CD8-positive, alpha-beta T cell (primary cell): ENCODE measurements at regions of chr5 and their contacts with region 1.

Region 1: GRCh38 chr5:134225618-134226440 is at the start of gene PPP2CA:
- DNase-seq: peak; percentile 98 to 100 (median 99)
- ATAC-seq: peak; percentile 80
- H3K4me3 ChIP-seq: peak within 1 kb of the TSS; percentile 83 to 87
- H3K4me3 Mint-ChIP-seq: peak within 1 kb of the TSS; percentile 96
- H3K27ac ChIP-seq: peak within 1 kb of the TSS; percentile 95 to 96
- H3K27ac Mint-ChIP-seq: peak within 1 kb of the TSS; percentile 98
- H3K4me1 ChIP-seq: peaks cover 45% of the 10 kb centered on the region
- H3K4me1 Mint-ChIP-seq: peaks cover 50% of the 10 kb centered on the region
- H3K27me3 ChIP-seq: no peaks in the 10 kb centered on the region
- H3K27me3 Mint-ChIP-seq: no peaks in the 10 kb centered on the region
- CTCF ChIP-seq: no peak
- total RNA-seq, gene PPP2CA: 233 to 260 TPM

Region 2: GRCh38 chr5:132746954-132747615 is 1478.7 kb before region 1 on chr5 and contains the start of gene CCNI2:
- CTCF ChIA-PET with region 1: no interaction called
- POLR2A ChIA-PET with region 1: no interaction called
- intact Hi-C with region 1: loop called in 1 of 2 experiments (anchors 5 kb)
- DNase-seq: peak; percentile 34 to 82 (median 65)
- ATAC-seq: peak; percentile 85
- H3K4me3 ChIP-seq: peak within 1 kb of the TSS; percentile 57 to 59
- H3K4me3 Mint-ChIP-seq: peak within 1 kb of the TSS; percentile 84
- H3K27ac ChIP-seq: peak within 1 kb of the TSS; percentile 29 to 36
- H3K27ac Mint-ChIP-seq: peak within 1 kb of the TSS; percentile 67
- H3K4me1 ChIP-seq: peaks cover 8% of the 10 kb centered on the region
- H3K4me1 Mint-ChIP-seq: peaks cover 11% of the 10 kb centered on the region
- H3K27me3 ChIP-seq: peaks cover 0 to 3% of the 10 kb centered on the region in 2 experiments
- H3K27me3 Mint-ChIP-seq: no peaks in the 10 kb centered on the region
- CTCF ChIP-seq: peak; percentile 45
- total RNA-seq, gene CCNI2: 4.4 to 6.3 TPM

Region 3: DNA sequence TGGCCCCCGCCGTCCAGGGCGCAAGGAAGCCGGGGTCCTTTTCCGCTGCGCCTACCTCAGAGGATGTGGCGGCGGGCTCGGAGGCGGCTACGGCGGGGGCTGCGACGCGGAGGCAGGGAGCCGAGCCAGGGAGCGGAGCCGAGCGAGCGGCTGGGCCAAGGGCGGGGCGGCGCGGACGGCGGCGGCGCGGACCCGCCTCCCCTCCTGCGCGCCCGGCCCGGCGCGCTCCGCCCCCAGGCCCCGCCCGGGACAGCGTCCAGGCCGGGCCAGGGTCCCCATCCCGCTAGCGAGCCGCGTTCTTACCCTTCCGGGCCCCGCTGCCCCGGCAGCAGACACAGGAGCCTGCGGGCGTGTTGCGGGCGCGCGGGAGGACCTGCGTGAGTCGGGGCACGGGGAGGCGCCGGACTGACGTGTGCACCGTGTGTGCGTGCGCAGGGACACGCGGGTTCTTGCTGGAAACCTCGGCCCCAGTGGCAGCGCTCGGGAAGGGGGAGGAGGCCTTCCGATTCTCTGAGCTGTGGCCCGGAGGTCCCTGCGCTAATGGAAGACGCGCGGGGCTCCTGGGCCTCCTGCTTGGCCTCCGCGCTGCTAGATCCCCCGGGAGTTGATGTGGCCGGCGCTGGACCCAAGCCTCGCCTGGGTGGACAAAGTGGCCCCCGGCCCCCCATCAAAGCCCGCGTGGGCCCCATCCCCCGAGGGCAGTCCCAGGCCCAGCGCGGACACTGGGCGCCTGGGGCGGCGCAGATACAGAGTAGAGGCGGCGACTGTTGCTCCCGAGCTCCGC is 221.0 kb before region 1 on chr5 and contains the start of gene VDAC1:
- CTCF ChIA-PET with region 1: no interaction called
- POLR2A ChIA-PET with region 1: interaction called, 5 read pairs
- intact Hi-C with region 1: loop called in 1 of 2 experiments (anchors 1 kb)
- DNase-seq: peak; percentile 68 to 96 (median 86)
- ATAC-seq: peak; percentile 80
- H3K4me3 ChIP-seq: peak within 1 kb of the TSS; percentile 68 to 81
- H3K4me3 Mint-ChIP-seq: peak within 1 kb of the TSS; percentile 95
- H3K27ac ChIP-seq: peak within 1 kb of the TSS; percentile 81 to 98
- H3K27ac Mint-ChIP-seq: peak within 1 kb of the TSS; percentile 97
- H3K4me1 ChIP-seq: peaks cover 30% of the 10 kb centered on the region
- H3K4me1 Mint-ChIP-seq: peaks cover 43% of the 10 kb centered on the region
- H3K27me3 ChIP-seq: no peaks in the 10 kb centered on the region
- H3K27me3 Mint-ChIP-seq: no peaks in the 10 kb centered on the region
- CTCF ChIP-seq: no peak
- total RNA-seq, gene VDAC1: 68.1 to 71.1 TPM

Region 4: GRCh38 chr5:134184155-134185135 is 41.4 kb before region 1 on chr5:
- CTCF ChIA-PET with region 1: interaction called, 3 read pairs
- POLR2A ChIA-PET with region 1: interaction called, 12 read pairs
- intact Hi-C with region 1: loop called (anchors 2 kb)
- DNase-seq: peak; percentile 62 to 84 (median 77)
- ATAC-seq: peak; percentile 98
- H3K4me3 ChIP-seq: no peak overlapping the region
- H3K4me3 Mint-ChIP-seq: no peak overlapping the region
- H3K27ac ChIP-seq: no peak overlapping the region
- H3K27ac Mint-ChIP-seq: no peak overlapping the region
- H3K4me1 ChIP-seq: peaks cover 4% of the 10 kb centered on the region
- H3K4me1 Mint-ChIP-seq: no peaks in the 10 kb centered on the region
- H3K27me3 ChIP-seq: no peaks in the 10 kb centered on the region
- H3K27me3 Mint-ChIP-seq: no peaks in the 10 kb centered on the region
- CTCF ChIP-seq: peak; percentile 84

Region 5: GRCh38 chr5:134289509-134290113 is 63.8 kb after region 1 on chr5:
- CTCF ChIA-PET with region 1: interaction called, 3 read pairs
- POLR2A ChIA-PET with region 1: no interaction called
- intact Hi-C with region 1: loop called in 1 of 2 experiments (anchors 10 kb)
- DNase-seq: peak in 8 of 9 experiments; percentile 14 to 77 (median 40)
- ATAC-seq: peak; percentile 72
- H3K4me3 ChIP-seq: no peak overlapping the region
- H3K4me3 Mint-ChIP-seq: no peak overlapping the region
- H3K27ac ChIP-seq: no peak overlapping the region
- H3K27ac Mint-ChIP-seq: no peak overlapping the region
- H3K4me1 ChIP-seq: no peaks in the 10 kb centered on the region
- H3K4me1 Mint-ChIP-seq: no peaks in the 10 kb centered on the region
- H3K27me3 ChIP-seq: no peaks in the 10 kb centered on the region
- H3K27me3 Mint-ChIP-seq: peaks cover 2% of the 10 kb centered on the region
- CTCF ChIP-seq: peak; percentile 59

Region 6: GRCh38 chr5:134637161-134637582 is 411.3 kb after region 1 on chr5:
- CTCF ChIA-PET with region 1: no interaction called
- POLR2A ChIA-PET with region 1: no interaction called
- intact Hi-C with region 1: loop called in 1 of 2 experiments (anchors 1 kb)
- DNase-seq: no peak
- ATAC-seq: no peak
- H3K4me3 ChIP-seq: no peak overlapping the region
- H3K4me3 Mint-ChIP-seq: no peak overlapping the region
- H3K27ac ChIP-seq: no peak overlapping the region
- H3K27ac Mint-ChIP-seq: no peak overlapping the region
- H3K4me1 ChIP-seq: no peaks in the 10 kb centered on the region
- H3K4me1 Mint-ChIP-seq: peaks cover under 1% of the 10 kb centered on the region
- H3K27me3 ChIP-seq: no peaks in the 10 kb centered on the region
- H3K27me3 Mint-ChIP-seq: no peaks in the 10 kb centered on the region
- CTCF ChIP-seq: no peak

Region 7: GRCh38 chr5:134873987-134874830 is 648.4 kb after region 1 on chr5 and contains the start of gene TXNDC15:
- CTCF ChIA-PET with region 1: no interaction called
- POLR2A ChIA-PET with region 1: no interaction called
- intact Hi-C with region 1: loop called in 1 of 2 experiments (anchors 10 kb)
- DNase-seq: peak; percentile 61 to 91 (median 80)
- ATAC-seq: peak; percentile 92
- H3K4me3 ChIP-seq: peak within 1 kb of the TSS; percentile 59 to 92
- H3K4me3 Mint-ChIP-seq: peak within 1 kb of the TSS; percentile 92
- H3K27ac ChIP-seq: peak within 1 kb of the TSS; percentile 67 to 96
- H3K27ac Mint-ChIP-seq: peak within 1 kb of the TSS; percentile 94
- H3K4me1 ChIP-seq: peaks cover 36% of the 10 kb centered on the region
- H3K4me1 Mint-ChIP-seq: peaks cover 40% of the 10 kb centered on the region
- H3K27me3 ChIP-seq: no peaks in the 10 kb centered on the region
- H3K27me3 Mint-ChIP-seq: no peaks in the 10 kb centered on the region
- CTCF ChIP-seq: no peak
- total RNA-seq, gene TXNDC15: 19.8 to 21.0 TPM

Region 8: DNA sequence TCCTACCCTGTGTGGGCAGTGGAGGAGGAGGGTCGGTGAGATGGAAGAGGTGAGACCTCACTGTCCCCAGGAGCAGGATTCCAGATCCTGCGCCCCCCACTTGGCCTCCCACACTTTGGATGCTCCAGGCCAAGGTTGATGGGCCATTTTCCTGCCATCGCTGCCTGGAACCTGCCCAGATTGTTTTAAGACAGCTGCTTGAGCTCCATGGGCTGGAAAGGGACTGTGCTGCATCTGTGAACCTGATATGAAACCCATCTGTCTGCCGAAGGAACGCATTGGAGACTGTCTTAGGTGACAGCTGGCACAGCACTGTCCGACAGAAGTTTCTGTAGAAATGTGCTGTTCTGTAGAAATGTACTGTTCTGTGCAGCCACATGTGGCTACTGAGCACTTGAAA is 1535.9 kb after region 1 on chr5:
- CTCF ChIA-PET with region 1: no interaction called
- POLR2A ChIA-PET with region 1: no interaction called
- intact Hi-C with region 1: no loop called
- DNase-seq: no peak
- ATAC-seq: no peak
- H3K4me3 ChIP-seq: no peak overlapping the region
- H3K4me3 Mint-ChIP-seq: no peak overlapping the region
- H3K27ac ChIP-seq: no peak overlapping the region
- H3K27ac Mint-ChIP-seq: no peak overlapping the region
- H3K4me1 ChIP-seq: no peaks in the 10 kb centered on the region
- H3K4me1 Mint-ChIP-seq: no peaks in the 10 kb centered on the region
- H3K27me3 ChIP-seq: no peaks in the 10 kb centered on the region
- H3K27me3 Mint-ChIP-seq: no peaks in the 10 kb centered on the region
- CTCF ChIP-seq: no peak